PC-9 (cell line): ENCODE measurements at regions of chrX and their contacts with region 1.

Region 1: DNA sequence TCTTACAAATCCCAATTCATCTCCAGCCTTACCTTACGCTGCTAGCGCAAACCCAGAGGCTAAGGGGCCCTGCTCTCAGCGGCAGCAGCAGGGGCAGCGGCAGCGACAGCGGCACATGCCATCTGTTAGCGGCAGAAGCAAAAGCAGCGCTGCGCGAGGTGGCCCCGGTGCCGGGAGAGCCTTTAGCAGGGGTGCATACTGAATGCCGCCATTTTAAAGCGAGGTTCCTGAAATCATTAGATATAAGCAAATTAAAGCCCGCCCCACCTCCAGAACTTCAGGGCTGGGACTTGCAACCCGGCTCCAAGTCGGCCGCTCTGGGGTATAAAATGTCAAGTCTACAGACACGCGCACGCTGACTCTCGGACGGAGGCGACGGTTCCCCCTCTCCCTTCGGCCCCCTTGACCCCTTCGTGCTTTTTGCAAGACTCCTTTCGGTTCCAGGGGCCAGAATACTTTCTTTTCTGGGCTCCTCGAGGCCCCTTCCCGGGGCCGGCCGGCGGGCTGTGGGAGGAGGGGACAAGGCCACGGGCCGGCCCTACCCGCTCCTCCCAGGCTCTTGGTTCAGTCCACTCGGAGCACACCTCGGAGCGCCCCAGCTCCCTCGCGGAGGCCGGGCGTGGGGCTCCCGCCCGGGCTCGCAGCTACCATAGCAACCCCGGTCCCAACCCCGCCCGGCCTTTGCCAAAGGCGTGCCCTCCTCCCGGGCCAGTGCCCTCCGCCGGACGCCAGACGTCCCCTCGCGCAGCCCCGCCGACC is at the start of gene MBNL3:
- DNase-seq: peak; percentile 72 to 86
- H3K4me3 ChIP-seq: peak within 1 kb of the TSS; percentile 93
- H3K27ac ChIP-seq: peak within 1 kb of the TSS; percentile 75
- H3K4me1 ChIP-seq: peaks cover 27% of the 10 kb centered on the region
- H3K27me3 ChIP-seq: no peaks in the 10 kb centered on the region
- CTCF ChIP-seq: no peak
- total RNA-seq, gene MBNL3: 24.4 and 36.1 TPM in 2 replicates

Region 2: GRCh38 chrX:132022967-132023895 is 465.8 kb before region 1 on chrX and contains the start of gene STK26:
- CTCF ChIA-PET with region 1: no interaction called
- POLR2A ChIA-PET with region 1: no interaction called
- intact Hi-C with region 1: loop called (anchors 5 kb)
- DNase-seq: peak; percentile 76 to 92
- H3K4me3 ChIP-seq: peak within 1 kb of the TSS; percentile 91
- H3K27ac ChIP-seq: peak within 1 kb of the TSS; percentile 85
- H3K4me1 ChIP-seq: peaks cover 35% of the 10 kb centered on the region
- H3K27me3 ChIP-seq: no peaks in the 10 kb centered on the region
- CTCF ChIP-seq: no peak
- total RNA-seq, gene STK26: 41.1 and 48.4 TPM in 2 replicates

Region 3: GRCh38 chrX:132188175-132188574 is 300.8 kb before region 1 on chrX:
- CTCF ChIA-PET with region 1: no interaction called
- POLR2A ChIA-PET with region 1: no interaction called
- intact Hi-C with region 1: no loop called
- DNase-seq: no peak
- H3K4me3 ChIP-seq: no peak overlapping the region
- H3K27ac ChIP-seq: no peak overlapping the region
- H3K4me1 ChIP-seq: peaks cover 24% of the 10 kb centered on the region
- H3K27me3 ChIP-seq: no peaks in the 10 kb centered on the region
- CTCF ChIP-seq: no peak

Region 4: DNA sequence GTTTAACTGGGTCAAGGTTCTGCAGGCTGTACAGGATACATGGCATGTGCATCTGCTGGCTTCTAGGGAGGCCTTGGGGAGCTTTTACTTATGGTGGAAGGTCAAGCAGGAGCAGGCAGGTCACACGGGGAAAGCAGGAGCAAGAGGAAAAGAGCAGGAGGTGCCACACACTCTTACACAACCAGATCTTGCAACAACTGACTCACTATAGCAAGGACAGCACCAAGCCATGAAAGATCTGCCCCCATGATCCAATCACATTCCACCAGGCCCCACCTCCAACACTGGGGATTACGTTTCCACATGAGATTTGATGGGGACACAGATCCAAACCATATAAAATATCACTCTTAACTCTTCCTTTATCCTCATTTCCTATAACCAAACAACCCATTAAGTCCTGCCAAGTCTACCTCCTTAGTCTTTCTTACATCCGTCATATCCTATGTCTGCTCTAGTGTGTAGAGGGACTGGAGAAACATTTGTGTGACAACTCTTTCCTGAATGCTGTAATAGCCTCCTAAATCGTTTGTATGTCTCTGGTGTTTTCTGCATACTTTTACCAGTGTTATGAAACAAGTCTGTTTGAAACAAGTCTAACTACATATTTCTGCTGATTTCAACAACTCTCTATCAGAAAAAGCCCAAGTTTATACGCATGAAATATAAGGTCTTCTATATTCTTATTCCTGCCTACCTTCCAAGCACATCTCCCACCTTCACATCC is 261.4 kb before region 1 on chrX:
- CTCF ChIA-PET with region 1: no interaction called
- POLR2A ChIA-PET with region 1: no interaction called
- intact Hi-C with region 1: no loop called
- DNase-seq: peak in 1 of 2 experiments; percentile 75
- H3K4me3 ChIP-seq: no peak overlapping the region
- H3K27ac ChIP-seq: peak overlapping the region; percentile 50
- H3K4me1 ChIP-seq: peaks cover 23% of the 10 kb centered on the region
- H3K27me3 ChIP-seq: no peaks in the 10 kb centered on the region
- CTCF ChIP-seq: no peak

Region 5: DNA sequence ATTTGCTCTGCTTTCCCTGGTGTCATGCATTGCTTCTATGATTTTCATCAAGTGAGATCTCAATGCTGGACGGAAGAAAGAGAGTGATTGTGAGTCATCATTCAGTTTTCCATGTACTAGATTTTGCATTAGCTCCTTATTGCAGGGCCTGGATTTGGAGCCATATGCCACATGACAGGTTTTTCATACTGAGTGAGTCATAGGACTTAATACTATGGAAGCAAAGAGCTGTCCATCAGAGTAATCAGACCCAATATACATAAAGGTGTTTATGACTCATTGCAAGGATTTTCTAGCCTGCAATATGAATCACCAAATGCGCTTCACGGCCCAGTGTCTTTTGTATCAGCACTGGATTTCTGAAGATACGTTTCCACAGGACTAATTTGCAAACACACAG is 740.4 kb after region 1 on chrX:
- CTCF ChIA-PET with region 1: no interaction called
- POLR2A ChIA-PET with region 1: no interaction called
- intact Hi-C with region 1: no loop called
- DNase-seq: peak; percentile 33 to 99
- H3K4me3 ChIP-seq: no peak overlapping the region
- H3K27ac ChIP-seq: peak overlapping the region; percentile 48
- H3K4me1 ChIP-seq: peaks cover 21% of the 10 kb centered on the region
- H3K27me3 ChIP-seq: no peaks in the 10 kb centered on the region
- CTCF ChIP-seq: no peak